Right ventricle myocardium superior (tissue), 1 donor: ENCODE measurements at regions of chr1 and their contacts with region 1.

Region 1: GRCh38 chr1:204872262-204872881 is 1.7 kb downstream of the NFASC start:
- DNase-seq: no peak
- ATAC-seq: peak; percentile 23

Region 2: DNA sequence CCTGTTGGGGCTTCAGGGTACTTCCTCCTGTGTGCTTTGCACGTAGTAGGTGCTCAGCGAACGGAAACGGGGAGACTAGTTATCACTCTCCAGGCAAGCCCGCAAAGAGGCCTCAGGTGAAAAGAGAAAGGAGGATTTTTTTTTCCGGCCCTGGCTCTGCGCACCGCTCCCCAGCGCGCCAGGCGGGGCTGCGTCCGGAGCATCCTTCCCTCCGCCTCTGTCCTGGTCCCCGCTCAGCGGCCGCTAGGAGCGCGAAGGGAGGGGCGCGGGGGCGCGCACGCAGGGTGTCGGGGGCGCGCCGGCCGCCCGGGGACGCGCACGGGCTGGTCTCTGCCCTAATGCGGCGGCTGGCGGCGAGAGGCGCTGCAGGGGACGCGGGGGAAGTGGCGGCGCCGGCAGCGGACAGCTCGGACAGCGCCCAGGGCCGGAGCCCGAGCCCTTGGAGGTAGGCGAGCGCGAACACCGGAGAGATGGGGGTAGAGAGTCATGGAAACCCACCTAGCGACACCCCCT is 44.0 kb before region 1 on chr1:
- intact Hi-C with region 1: loop called (anchors 5 kb)
- DNase-seq: peak; percentile 84
- ATAC-seq: peak; percentile 98

Region 3: DNA sequence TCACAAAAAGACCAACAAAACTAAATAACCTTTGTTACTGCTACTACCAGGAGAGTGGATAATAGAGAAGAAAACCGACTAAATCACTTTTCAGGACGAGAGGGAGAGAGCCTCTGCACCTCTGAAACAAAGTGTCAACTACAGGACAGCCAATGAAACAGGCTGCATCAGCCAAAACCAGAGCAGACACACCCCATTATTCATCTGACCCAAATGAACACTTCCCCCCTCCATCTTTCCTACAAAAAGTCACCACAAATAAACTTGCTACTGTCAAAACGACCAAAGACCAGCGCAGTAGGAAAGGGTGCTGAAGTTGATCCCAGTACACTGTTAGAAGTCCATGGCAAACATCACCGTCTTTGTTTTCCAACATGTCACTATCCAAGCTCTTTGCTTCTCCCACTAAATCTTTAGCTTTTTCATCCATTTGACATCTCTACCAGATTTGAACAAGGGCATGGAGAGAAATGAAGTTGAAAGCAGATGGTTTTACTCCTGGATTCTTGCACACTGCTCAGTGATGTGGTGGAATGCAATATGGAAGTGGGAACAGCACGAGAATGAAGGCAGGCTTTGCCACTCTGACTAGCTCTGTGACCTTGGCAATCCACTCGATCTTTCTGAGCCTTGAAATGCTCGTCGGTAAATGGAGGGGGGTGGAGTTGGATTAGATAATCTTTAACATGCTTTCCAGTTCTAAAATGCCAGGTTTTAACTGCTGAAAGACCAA is 318.6 kb after region 1 on chr1:
- intact Hi-C with region 1: no loop called
- DNase-seq: no peak
- ATAC-seq: peak; percentile 46